Caco-2 (cell line): ENCODE measurements at regions of chr1 and their contacts with region 1.

Region 1: DNA sequence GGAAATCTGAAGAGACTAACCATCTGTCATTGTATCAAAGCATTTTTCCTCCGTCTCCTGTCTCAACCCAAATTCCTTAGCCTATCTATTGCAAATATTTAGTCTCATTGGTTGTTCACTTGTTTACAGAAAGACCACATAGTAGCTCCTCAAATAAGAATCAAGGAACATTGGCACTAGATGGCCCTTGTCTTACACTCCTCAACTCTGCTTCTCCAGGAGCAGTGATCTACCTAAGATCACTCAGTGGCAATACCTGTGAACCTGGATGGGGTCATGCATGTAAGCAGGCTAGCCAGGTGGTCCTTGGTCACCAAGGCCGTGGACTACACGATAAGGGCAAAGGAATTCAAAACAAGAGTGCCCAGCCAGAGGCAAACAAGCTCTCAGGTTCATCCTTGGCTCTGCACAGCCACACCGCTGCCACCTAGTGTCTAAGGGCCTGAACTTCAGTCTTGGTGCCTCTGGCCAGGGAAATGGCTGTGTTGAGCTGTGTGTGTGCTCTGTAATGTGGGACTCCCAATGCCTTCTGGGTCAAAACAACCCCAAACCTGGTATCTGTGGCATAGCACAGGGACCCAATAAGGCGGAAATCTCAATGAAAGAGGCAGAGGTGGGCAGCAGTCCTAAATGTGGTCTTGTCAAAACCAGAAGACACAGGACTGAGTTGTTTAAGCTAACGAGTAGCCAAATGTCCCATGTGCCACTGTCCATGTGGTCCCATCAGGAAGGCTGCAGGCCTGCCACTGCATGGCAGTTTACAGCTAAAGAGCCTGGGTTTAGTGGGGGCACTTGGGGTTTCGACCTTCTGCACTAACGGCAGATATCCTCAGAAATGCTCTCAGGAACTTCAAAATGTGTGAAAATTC is 54.5 kb downstream of the GPR161 start:
- DNase-seq: peak; percentile 85 to 87
- H3K4me3 ChIP-seq: no peak overlapping the region
- H3K4me3 Mint-ChIP-seq: peak overlapping the region; percentile 25
- H3K27ac Mint-ChIP-seq: peak overlapping the region; percentile 62
- H3K4me1 ChIP-seq: peaks cover 38% of the 10 kb centered on the region
- H3K4me1 Mint-ChIP-seq: peaks cover 41% of the 10 kb centered on the region
- H3K27me3 ChIP-seq: no peaks in the 10 kb centered on the region
- H3K27me3 Mint-ChIP-seq: no peaks in the 10 kb centered on the region
- CTCF ChIP-seq: peak; percentile 90 to 92

Region 2: GRCh38 chr1:167599957-167600581 is 482.2 kb before region 1 on chr1:
- CTCF ChIA-PET with region 1: interaction called, 15 read pairs
- POLR2A ChIA-PET with region 1: no interaction called
- intact Hi-C with region 1: loop called (anchors 5 kb)
- DNase-seq: peak in 1 of 2 experiments; percentile 8
- H3K4me3 ChIP-seq: no peak overlapping the region
- H3K4me3 Mint-ChIP-seq: no peak overlapping the region
- H3K27ac Mint-ChIP-seq: no peak overlapping the region
- H3K4me1 ChIP-seq: no peaks in the 10 kb centered on the region
- H3K4me1 Mint-ChIP-seq: peaks cover 14% of the 10 kb centered on the region
- H3K27me3 ChIP-seq: no peaks in the 10 kb centered on the region
- H3K27me3 Mint-ChIP-seq: peaks cover 6% of the 10 kb centered on the region
- CTCF ChIP-seq: peak; percentile 42 to 44

Region 3: DNA sequence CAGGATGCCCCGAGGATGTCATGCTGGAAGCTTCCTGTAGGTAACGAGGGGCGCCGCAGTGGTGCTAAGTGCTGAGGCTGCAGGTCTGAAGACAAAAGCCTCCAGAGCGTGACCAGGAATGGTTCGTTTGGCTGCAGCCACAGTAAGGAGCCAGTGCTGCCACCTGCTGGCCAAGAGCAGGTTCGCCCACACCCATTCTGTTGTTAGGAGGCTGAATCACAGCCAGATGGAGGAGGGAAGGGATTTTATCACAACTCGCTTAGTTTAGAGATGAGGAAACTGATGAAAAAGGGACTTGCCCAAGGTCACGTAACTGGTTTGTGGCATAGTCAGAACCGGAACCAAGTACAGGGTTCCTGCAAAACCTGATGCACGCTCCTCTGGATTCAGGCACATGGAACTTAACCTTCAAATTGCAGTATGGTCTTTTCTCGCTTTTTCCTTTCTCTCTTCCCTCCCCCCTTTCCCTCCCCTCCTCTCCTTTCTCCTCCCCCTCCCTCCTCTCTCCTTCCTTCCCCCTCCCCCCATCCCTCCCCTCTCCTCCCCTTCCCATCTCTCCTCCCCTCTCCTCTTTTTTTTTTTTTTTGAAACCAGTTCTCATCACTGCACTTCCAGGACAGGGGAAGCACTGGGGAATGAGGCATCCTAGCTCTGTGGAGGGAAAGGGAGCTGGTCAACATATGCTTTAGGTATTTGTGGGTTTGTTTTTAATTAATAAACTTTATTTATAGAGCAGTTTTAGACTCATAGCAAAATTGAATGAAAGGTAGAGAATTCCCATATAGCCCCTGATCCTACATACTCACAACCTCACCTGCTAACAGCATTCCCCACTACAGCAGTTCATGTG is 278.7 kb before region 1 on chr1:
- CTCF ChIA-PET with region 1: no interaction called
- POLR2A ChIA-PET with region 1: no interaction called
- intact Hi-C with region 1: loop called (anchors 2 kb)
- DNase-seq: peak; percentile 90 to 91
- H3K4me3 ChIP-seq: no peak overlapping the region
- H3K4me3 Mint-ChIP-seq: peak overlapping the region; percentile 35
- H3K27ac Mint-ChIP-seq: peak overlapping the region; percentile 45
- H3K4me1 ChIP-seq: peaks cover 32% of the 10 kb centered on the region
- H3K4me1 Mint-ChIP-seq: peaks cover 46% of the 10 kb centered on the region
- H3K27me3 ChIP-seq: no peaks in the 10 kb centered on the region
- H3K27me3 Mint-ChIP-seq: no peaks in the 10 kb centered on the region
- CTCF ChIP-seq: peak; percentile 86 to 87

Region 4: DNA sequence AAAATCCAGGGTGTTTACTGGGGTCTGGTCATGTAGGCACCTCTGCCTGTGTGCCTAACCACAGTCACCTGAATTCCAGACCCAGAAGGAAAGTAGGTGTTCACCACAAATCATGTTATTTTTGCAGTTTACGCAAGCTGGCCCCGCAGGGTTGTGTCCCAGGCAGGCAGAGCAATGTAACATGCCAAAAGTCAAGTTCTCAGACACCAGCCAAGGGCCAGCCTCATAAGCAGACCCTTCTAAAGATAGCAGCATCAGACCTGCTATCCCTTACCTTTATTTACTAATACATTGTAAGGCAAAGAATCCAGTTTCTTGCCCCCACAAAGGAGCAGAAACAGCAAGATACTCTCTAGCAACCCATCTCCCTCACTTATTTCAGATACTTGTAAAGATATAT is 28.6 kb before region 1 on chr1:
- CTCF ChIA-PET with region 1: no interaction called
- POLR2A ChIA-PET with region 1: no interaction called
- intact Hi-C with region 1: no loop called
- DNase-seq: no peak
- H3K4me3 ChIP-seq: no peak overlapping the region
- H3K4me3 Mint-ChIP-seq: no peak overlapping the region
- H3K27ac Mint-ChIP-seq: no peak overlapping the region
- H3K4me1 ChIP-seq: no peaks in the 10 kb centered on the region
- H3K4me1 Mint-ChIP-seq: no peaks in the 10 kb centered on the region
- H3K27me3 ChIP-seq: no peaks in the 10 kb centered on the region
- H3K27me3 Mint-ChIP-seq: no peaks in the 10 kb centered on the region
- CTCF ChIP-seq: no peak

Region 5: DNA sequence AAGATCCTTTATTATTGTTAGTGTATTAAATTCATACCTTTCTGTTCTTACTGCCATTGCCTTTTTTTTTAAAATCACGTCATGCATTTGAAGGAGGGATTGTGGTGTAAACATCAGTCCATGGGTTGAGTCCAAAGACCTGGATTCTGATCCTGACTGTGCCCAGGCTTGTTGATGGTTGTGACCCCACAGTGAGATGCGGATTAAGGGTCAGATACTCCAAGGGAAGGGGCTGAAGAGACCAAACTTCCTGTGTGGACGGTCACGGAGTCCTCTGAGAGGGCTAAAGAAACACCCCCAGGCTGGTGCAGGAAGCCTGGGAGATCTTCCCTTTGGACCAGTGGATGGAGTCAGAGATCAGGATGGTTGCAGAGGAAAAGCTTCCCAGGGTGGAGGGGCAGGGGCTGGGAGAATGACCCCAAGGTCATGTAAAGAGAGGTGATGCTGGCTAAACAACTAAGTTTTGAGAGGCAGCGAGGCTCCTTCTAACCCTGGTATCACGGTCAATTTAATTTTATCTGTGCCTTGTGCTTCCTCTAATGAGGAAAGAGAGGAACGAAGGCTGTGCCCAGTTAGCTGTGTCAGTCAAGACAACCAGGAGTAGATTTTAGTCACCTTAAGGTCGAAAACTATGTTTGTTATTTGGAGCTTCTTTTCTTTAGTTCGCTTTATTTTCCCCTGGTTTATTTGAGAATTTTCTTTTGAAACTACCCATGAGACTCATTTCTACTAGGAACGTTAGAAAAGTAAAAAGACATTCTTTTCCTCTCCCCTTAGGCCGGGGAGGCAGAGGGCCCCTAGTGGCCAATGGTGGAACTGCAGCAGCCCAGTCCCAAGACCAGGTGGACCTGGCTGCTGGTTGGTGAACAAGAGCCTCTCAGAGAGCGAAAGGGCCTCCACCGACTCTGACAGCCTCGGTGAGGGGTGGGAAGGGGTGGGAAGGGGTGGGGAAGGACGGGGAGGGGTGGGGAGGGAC is 63.2 kb after region 1 on chr1:
- CTCF ChIA-PET with region 1: interaction called, 10 read pairs
- POLR2A ChIA-PET with region 1: no interaction called
- intact Hi-C with region 1: no loop called
- DNase-seq: peak; percentile 93 to 95
- H3K4me3 ChIP-seq: no peak overlapping the region
- H3K4me3 Mint-ChIP-seq: peak overlapping the region; percentile 68
- H3K27ac Mint-ChIP-seq: peak overlapping the region; percentile 53
- H3K4me1 ChIP-seq: peaks cover 36% of the 10 kb centered on the region
- H3K4me1 Mint-ChIP-seq: peaks cover 32% of the 10 kb centered on the region
- H3K27me3 ChIP-seq: no peaks in the 10 kb centered on the region
- H3K27me3 Mint-ChIP-seq: no peaks in the 10 kb centered on the region
- CTCF ChIP-seq: peak; percentile 96 to 98

Region 6: GRCh38 chr1:168321945-168322344 is 239.7 kb after region 1 on chr1:
- CTCF ChIA-PET with region 1: interaction called, 12 read pairs
- POLR2A ChIA-PET with region 1: no interaction called
- intact Hi-C with region 1: loop called (anchors 1 kb)
- DNase-seq: peak in 1 of 2 experiments; percentile 31
- H3K4me3 ChIP-seq: no peak overlapping the region
- H3K4me3 Mint-ChIP-seq: no peak overlapping the region
- H3K27ac Mint-ChIP-seq: no peak overlapping the region
- H3K4me1 ChIP-seq: 0 out of 2 replicates have a peak, but pooled peaks cover 4% of the 10 kb centered on the region
- H3K4me1 Mint-ChIP-seq: no peaks in the 10 kb centered on the region
- H3K27me3 ChIP-seq: no peaks in the 10 kb centered on the region
- H3K27me3 Mint-ChIP-seq: no peaks in the 10 kb centered on the region
- CTCF ChIP-seq: peak; percentile 28 to 63